ENCODE measurements at regions of chr6 and their contacts with region 1.

Region 1: DNA sequence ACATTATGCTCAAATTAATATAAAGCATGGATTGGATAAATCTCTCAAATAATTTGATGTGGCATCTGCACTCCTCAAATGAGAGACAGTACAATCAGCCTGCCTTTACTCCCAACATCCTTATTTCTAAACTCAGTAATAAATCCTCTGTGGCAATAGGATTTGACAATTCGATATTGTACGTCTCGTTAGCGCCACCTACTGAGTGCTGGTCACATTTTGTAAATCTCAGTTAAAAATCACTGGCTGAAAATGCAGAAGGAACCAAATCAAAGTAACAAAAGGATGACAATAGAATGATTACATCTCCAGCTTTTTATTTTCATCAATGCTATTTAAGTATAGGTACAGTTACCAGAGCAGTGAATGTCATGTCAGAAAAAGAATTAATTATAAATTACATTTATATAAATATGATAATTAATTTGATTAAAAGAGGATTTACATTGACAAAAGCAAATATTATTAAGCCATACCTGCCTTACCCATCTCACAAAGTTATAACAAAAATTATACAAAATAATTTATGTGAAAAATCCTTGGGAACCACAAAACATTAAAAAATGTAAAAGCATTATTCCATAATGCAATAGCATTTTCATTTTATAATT is 20.2 kb upstream of the GJE1 start:
- DNase-seq: peak; percentile 81
- ATAC-seq: no peak
- H3K4me3 Mint-ChIP-seq: no peak overlapping the region
- H3K27ac Mint-ChIP-seq: no peak overlapping the region
- H3K4me1 Mint-ChIP-seq: no peaks in the 10 kb centered on the region
- H3K27me3 Mint-ChIP-seq: peaks cover 5% of the 10 kb centered on the region

Region 2: DNA sequence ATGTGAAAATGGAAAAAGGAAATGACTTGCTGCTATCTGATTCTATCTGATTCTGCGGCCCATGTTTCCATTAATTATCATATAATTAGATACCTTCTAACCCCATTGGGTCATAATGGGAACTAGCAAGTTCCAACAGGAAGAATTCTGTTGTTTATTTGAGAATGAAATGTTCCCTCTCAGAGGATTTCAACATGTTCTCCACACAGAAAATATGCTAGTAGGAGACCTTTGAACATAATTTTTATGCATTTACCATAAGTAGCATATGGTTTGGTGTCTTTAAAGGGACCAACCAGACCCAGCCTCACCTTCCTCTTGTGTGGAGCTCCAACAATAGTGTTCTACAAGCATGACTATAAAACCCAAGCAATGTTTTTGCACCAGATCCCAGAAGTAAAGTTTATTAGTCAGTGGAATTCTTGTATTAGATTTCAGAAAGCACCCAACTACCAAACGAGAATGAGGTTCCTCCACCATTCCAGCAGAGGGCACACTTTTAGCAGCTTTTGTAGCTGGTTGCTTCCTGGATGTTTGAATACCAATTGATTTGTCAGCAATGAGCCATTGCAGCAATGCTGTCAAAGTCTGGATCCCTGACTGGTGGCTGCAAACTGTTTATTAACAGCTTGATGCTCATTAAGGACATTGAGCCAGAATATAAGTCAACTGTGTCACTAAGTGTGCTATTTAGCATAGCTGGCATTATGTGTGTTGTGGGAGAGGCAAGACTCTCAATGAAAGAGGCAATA is 123.4 kb before region 1 on chr6:
- CTCF ChIA-PET with region 1: interaction called, 19 read pairs
- POLR2A ChIA-PET with region 1: no interaction called
- DNase-seq: peak; percentile 45
- ATAC-seq: peak; percentile 36
- H3K4me3 Mint-ChIP-seq: no peak overlapping the region
- H3K27ac Mint-ChIP-seq: no peak overlapping the region
- H3K4me1 Mint-ChIP-seq: no peaks in the 10 kb centered on the region
- H3K27me3 Mint-ChIP-seq: peaks cover 3% of the 10 kb centered on the region

Measured in activated CD8-positive, alpha-beta T cell treated with anti-CD3 and anti-CD28 coated beads, Interleukin-2, amount 10 ng/mL, durations not matched to agents 7 days and 5 days (primary cell).